Ascending aorta (tissue), 2 donors: ENCODE measurements at regions of chr12 and their contacts with region 1.

Region 1: DNA sequence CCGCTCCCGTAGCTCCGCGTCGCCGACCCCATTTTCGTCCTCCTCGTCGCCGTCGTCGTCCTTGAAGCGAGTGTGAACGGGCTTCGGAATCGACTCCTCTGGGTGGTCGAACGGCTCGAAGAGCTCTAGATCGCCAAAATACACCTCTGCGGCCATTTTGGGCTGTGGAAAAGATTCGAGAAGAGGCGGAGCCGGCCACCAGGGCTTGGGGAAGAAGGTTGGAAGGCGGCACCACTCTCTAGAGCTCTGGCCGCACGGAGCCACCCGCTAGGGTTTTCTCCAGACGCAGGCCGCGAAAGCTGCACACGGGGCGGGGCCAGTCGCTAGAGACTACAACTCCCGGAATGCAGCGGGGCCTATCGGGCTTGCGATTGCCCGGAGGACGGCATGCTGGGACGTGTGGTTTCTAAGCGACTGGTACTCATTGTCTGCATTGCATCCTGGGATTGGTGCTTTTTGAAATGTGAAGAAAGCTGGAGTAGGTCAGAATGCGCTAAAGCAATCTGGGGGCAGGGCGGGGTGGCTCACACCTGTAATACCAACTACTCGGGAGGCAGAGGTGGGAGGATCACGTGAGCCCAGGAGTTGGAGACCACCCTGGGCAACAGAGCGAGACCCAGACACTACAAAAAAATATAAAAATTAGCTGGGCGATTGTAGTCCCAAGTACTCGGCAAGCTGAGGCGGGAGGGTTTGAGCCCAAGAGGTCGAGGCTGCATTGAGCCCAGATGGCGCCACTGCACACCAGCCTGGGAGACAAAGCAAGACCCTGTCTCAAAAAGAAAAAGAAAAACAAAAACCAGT is at the start of gene ZCCHC8:
- DNase-seq: peak; percentile 92 to 97
- H3K4me3 ChIP-seq: peak within 1 kb of the TSS; percentile 78 to 88
- H3K27ac ChIP-seq: peak within 1 kb of the TSS; percentile 97 to 99
- H3K4me1 ChIP-seq: peaks cover 7 to 9% of the 10 kb centered on the region in 2 donors
- H3K27me3 ChIP-seq: no peaks in the 10 kb centered on the region
- CTCF ChIP-seq: no peak
- total RNA-seq, gene ZCCHC8: 6.4 TPM

Region 2: DNA sequence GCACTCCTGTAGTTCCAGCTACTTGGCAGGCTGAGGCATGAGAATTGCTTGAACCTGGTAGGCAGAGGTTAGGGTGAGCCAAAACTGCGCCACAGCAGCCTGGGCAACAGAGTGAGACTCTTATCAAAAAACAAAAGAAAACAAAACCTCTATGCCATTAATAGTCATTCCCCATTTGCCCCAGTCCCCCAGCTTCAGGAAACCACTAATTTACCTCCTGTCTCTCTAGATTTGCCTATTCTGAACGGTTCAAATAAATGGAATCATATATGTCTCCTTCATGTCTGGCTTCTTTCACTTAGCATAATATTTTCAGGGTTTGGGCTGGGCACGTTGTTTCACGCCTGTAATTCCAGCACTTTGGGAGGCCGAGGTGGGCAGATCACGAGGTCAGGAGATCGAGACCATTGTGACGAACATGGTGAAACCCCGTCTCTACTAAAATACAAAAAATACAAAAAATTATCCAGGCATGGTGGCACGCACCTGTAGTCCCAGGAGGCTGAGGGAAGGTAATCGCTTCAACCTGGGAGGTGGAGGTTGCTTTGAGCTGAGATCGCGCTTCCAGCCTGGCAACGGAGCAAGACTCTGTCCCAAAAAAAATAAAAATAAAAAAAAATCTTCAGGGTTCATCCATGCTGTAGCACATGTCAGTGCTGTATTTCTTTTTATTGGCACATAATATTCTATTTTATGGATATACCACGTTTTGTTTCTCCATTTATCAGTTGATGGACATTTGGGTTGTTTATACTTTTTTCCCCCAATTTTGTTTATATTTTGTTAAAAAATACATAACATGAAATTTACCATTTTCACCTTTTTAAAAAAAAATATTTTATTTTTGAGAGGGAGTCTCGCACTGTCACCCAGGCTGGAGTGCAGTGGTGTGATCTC is 58.1 kb after region 1 on chr12:
- intact Hi-C with region 1: no loop called
- DNase-seq: no peak
- H3K4me3 ChIP-seq: no peak overlapping the region
- H3K27ac ChIP-seq: no peak overlapping the region
- H3K4me1 ChIP-seq: no peaks in the 10 kb centered on the region
- H3K27me3 ChIP-seq: no peaks in the 10 kb centered on the region
- CTCF ChIP-seq: no peak

Region 3: DNA sequence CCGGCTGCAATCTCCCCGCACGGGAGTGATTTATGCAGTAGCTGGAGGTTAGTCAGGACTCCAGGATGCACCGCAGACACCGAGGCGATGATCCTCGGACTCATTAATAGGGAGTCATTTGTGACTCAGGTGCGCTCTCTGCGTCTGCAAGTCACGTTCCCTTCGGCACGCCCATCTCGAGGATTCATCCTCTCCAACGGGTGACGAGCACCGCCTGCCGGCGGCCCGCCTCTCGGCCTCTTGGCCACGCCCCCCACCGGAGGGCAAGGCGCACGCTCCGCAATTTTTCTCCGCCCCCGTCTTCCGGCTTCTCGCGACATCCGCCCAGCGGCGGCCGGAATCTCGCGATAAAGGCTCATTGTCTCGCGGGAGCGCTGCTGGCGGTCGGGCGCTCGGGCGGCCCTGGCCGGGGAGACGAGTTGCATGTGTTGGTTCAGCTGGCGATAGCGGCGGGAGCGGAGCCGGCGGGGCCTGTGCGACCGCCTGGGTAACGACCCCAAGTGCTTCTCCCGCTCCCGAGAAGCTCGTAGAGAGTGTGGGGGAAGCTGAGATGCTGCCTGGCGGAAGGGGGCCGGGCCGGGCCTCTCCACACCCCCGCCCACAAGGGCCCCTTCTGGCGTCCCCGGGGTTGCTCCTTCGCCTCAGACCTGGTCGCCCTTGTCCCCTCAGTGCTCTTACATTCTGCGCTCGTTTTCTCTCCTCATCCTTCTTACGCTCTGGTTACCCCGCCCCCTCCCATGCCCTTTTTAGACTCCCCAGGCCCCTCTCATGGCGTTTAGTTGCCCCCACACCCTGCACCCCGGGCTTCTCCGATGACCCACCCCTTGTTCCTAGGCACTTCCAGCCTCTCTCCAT is 251.8 kb after region 1 on chr12 and contains the start of gene DENR:
- intact Hi-C with region 1: loop called (anchors 1 kb)
- DNase-seq: peak; percentile 90 to 99
- H3K4me3 ChIP-seq: peak within 1 kb of the TSS; percentile 77 to 80
- H3K27ac ChIP-seq: peak within 1 kb of the TSS; percentile 70 to 75
- H3K4me1 ChIP-seq: peaks cover 3 to 12% of the 10 kb centered on the region in 2 donors
- H3K27me3 ChIP-seq: no peaks in the 10 kb centered on the region
- CTCF ChIP-seq: peak; percentile 63 to 86 (median 72)
- total RNA-seq, gene DENR: 12.2 TPM